Sigmoid colon (tissue), 7 donors: ENCODE measurements at regions of chr6 and their contacts with region 1.

Region 1: GRCh38 chr6:134097114-134097707 is 44.8 kb upstream of the SLC2A12 start:
- DNase-seq: peak; percentile 71
- H3K4me3 ChIP-seq: no peak overlapping the region
- H3K27ac ChIP-seq: no peak overlapping the region
- H3K4me1 ChIP-seq: no peaks in the 10 kb centered on the region
- H3K27me3 ChIP-seq: no peaks in the 10 kb centered on the region
- CTCF ChIP-seq: peak; percentile 24 to 61 (median 54)
- EP300 ChIP-seq: no peak
- POLR2A ChIP-seq: no peak

Region 2: DNA sequence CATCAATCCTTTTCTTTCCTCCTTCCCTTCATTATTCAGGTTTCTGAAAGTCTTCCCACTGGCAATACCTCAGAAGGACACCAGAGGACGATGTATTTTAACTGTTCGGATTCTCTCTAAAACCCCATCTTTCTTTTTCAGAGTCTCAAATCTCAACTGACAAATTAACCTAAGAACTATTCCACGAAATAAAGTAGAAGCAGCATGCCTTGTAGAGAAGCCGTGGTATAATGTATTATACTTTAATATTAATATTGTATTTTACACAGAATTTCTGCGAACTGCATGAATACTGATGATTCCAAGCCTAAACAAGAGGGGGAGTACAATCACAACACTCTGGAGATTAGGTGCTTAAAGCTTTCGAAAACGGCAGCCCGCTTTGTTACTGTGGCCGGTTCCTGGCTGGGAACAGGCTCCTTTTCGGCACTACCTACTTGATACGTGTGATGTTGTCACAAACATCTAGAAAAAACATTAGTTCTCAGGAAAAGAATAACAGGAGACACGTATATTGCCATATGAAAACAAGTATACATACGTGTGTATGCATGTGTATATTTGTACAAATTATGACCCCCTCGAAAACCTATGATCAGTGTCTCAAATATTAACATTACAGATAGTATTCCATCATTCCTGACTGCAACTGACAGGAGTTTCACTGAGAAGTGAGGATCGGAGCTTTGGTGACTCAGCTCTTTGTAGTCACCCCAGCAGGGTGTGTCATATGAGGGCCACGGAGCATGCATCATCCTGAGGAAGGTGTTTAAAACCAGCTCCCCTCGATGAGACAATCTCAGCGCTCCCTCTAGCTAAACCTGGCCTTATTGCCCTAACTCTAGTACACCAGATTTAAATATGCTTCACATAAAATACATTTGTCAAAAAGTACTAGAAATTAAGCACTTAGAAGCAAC is 528.0 kb before region 1 on chr6:
- intact Hi-C with region 1: loop called (anchors 5 kb)
- DNase-seq: peak; percentile 68
- H3K4me3 ChIP-seq: peak overlapping the region; percentile 8 to 40 (median 36)
- H3K27ac ChIP-seq: peak overlapping the region; percentile 24 to 65 (median 42)
- H3K4me1 ChIP-seq: peaks cover 0 to 10% (median 5%) of the 10 kb centered on the region in 4 donors
- H3K27me3 ChIP-seq: peaks cover 0 to 6% (median 0%) of the 10 kb centered on the region in 3 donors
- CTCF ChIP-seq: peak; percentile 69 to 98 (median 92)
- EP300 ChIP-seq: no peak
- POLR2A ChIP-seq: no peak

Region 3: GRCh38 chr6:133923938-133924593 is 173.1 kb before region 1 on chr6:
- intact Hi-C with region 1: loop called (anchors 1 kb)
- DNase-seq: peak; percentile 74
- H3K4me3 ChIP-seq: no peak overlapping the region
- H3K27ac ChIP-seq: no peak overlapping the region
- H3K4me1 ChIP-seq: no peaks in the 10 kb centered on the region
- H3K27me3 ChIP-seq: peaks cover 0 to 16% (median 0%) of the 10 kb centered on the region in 3 donors
- CTCF ChIP-seq: peak; percentile 63 to 81 (median 80)
- EP300 ChIP-seq: no peak
- POLR2A ChIP-seq: no peak

Region 4: GRCh38 chr6:133973109-133973971 is 123.9 kb before region 1 on chr6:
- intact Hi-C with region 1: loop called (anchors 10 kb)
- DNase-seq: no peak
- H3K4me3 ChIP-seq: no peak overlapping the region
- H3K27ac ChIP-seq: peak overlapping the region in 3 of 4 donors; percentile 4 to 17 (median 5)
- H3K4me1 ChIP-seq: peaks cover 0 to 19% (median 17%) of the 10 kb centered on the region in 4 donors
- H3K27me3 ChIP-seq: no peaks in the 10 kb centered on the region
- CTCF ChIP-seq: peak; percentile 43 to 69 (median 68)
- EP300 ChIP-seq: no peak
- POLR2A ChIP-seq: no peak

Region 5: GRCh38 chr6:134063966-134064445 is 33.2 kb before region 1 on chr6:
- intact Hi-C with region 1: loop called (anchors 1 kb)
- DNase-seq: peak; percentile 79
- H3K4me3 ChIP-seq: no peak overlapping the region
- H3K27ac ChIP-seq: peak overlapping the region in 3 of 4 donors; percentile 50 to 76 (median 64)
- H3K4me1 ChIP-seq: peaks cover 0 to 34% (median 23%) of the 10 kb centered on the region in 4 donors
- H3K27me3 ChIP-seq: no peaks in the 10 kb centered on the region
- CTCF ChIP-seq: peak; percentile 59 to 83 (median 76)
- EP300 ChIP-seq: no peak
- POLR2A ChIP-seq: no peak